ENCODE measurements at regions of chr16 and their contacts with region 1.

Region 1: GRCh38 chr16:78353610-78354275 is 254.3 kb downstream of the WWOX start:
- DNase-seq: no peak
- H3K4me3 ChIP-seq: no peak overlapping the region
- H3K27ac ChIP-seq: no peak overlapping the region
- H3K27me3 ChIP-seq: no peaks in the 10 kb centered on the region
- CTCF ChIP-seq: no peak

Region 2: DNA sequence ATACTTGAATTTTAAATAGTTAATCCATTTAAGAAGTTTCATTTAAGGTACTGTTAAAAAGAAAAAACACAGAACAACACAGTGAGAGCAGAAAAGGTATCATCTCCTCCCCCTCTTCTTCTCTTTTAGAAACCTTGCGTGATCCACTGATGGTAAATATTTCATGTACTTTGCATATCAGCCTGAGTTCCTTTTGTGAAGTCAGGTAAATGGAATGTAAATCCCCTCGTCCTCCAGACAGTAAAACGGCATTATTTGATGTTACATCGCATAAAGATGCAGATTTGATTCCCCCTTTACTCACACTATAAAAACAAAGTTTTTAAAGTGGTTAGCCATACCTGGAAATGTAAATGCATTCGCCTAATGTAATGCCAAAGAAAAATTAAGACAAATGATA is 19.9 kb before region 1 on chr16:
- intact Hi-C with region 1: loop called (anchors 1 kb)
- DNase-seq: no peak
- H3K4me3 ChIP-seq: no peak overlapping the region
- H3K27ac ChIP-seq: no peak overlapping the region
- H3K27me3 ChIP-seq: no peaks in the 10 kb centered on the region
- CTCF ChIP-seq: no peak

Region 3: DNA sequence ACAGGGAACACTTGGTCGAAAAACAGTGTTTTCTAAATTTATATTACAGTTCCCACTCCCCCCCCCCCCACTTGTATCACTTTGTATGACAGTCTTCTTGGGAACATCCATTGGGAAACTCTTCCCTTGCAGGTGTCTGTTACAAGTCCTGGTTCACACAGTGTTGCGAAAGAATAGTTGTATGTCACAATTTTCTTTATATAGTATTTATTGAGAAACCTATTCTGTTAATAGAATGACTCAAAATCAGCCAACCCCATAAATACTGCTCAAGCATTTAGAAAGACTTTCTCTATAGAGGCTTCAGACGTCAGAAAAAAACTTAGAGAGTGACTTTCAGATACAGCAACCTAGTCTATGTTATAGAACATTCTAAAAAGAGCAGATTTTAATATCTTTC is 160.1 kb after region 1 on chr16:
- intact Hi-C with region 1: no loop called
- DNase-seq: no peak
- H3K4me3 ChIP-seq: no peak overlapping the region
- H3K27ac ChIP-seq: no peak overlapping the region
- H3K27me3 ChIP-seq: no peaks in the 10 kb centered on the region
- CTCF ChIP-seq: no peak

Region 4: GRCh38 chr16:78639775-78640174 is 286.0 kb after region 1 on chr16:
- intact Hi-C with region 1: no loop called
- DNase-seq: no peak
- H3K4me3 ChIP-seq: no peak overlapping the region
- H3K27ac ChIP-seq: no peak overlapping the region
- H3K27me3 ChIP-seq: peaks cover 0 to 7% (median 0%) of the 10 kb centered on the region in 45 donors
- CTCF ChIP-seq: no peak

Measured in dorsolateral prefrontal cortex (tissue), 120 donors.